Activated CD4-positive, alpha-beta T cell treated with anti-CD3 and anti-CD28 coated beads, Interleukin-2, amount 10 ng/mL, durations not matched to agents 24 days and 14 days (primary cell): ENCODE measurements at regions of chr3 and their contacts with region 1.

Region 1: GRCh38 chr3:88058591-88059368 is at the starts of genes CGGBP1 and ZNF654:
- DNase-seq: peak; percentile 100
- H3K4me3 Mint-ChIP-seq: peak within 1 kb of the TSS; percentile 100
- H3K27ac Mint-ChIP-seq: peak within 1 kb of the TSS; percentile 97
- H3K4me1 Mint-ChIP-seq: peaks cover 49% of the 10 kb centered on the region
- H3K27me3 Mint-ChIP-seq: no peaks in the 10 kb centered on the region
- total RNA-seq, gene CGGBP1: 85.9 and 87.2 TPM in 2 replicates
- total RNA-seq, gene ZNF654: 18.1 and 18.7 TPM in 2 replicates

Region 2: GRCh38 chr3:87997298-87997697 is 61.5 kb before region 1 on chr3:
- intact Hi-C with region 1: loop called (anchors 2 kb)
- DNase-seq: peak; percentile 81
- H3K4me3 Mint-ChIP-seq: peak overlapping the region; percentile 63
- H3K27ac Mint-ChIP-seq: peak overlapping the region; percentile 75
- H3K4me1 Mint-ChIP-seq: peaks cover 17% of the 10 kb centered on the region
- H3K27me3 Mint-ChIP-seq: peaks cover 5% of the 10 kb centered on the region

Region 3: GRCh38 chr3:88031642-88032077 is 27.1 kb before region 1 on chr3:
- intact Hi-C with region 1: loop called (anchors 1 kb)
- DNase-seq: peak; percentile 73
- H3K4me3 Mint-ChIP-seq: peak overlapping the region; percentile 84
- H3K27ac Mint-ChIP-seq: peak overlapping the region; percentile 68
- H3K4me1 Mint-ChIP-seq: peaks cover 30% of the 10 kb centered on the region
- H3K27me3 Mint-ChIP-seq: no peaks in the 10 kb centered on the region

Region 4: DNA sequence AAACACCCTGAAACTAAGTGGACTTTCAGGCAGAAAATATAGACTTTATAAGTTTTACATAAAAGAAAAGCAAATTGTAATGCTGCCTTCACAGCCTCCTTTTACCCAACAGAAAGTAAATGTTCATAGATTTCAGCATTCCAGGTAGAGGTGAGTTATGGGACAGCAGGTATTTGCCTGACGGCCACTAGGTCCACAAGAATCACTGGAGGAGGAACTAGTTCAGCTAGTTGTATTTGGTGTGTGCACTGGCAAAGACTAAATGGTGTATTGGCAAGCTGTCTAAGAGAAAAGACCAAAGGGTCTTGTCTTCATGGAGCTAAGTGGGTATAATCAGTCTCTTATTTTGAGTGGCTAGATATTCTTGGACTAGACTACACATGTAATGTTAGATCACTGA is 34.5 kb after region 1 on chr3:
- intact Hi-C with region 1: no loop called
- DNase-seq: no peak
- H3K4me3 Mint-ChIP-seq: no peak overlapping the region
- H3K27ac Mint-ChIP-seq: no peak overlapping the region
- H3K4me1 Mint-ChIP-seq: peaks cover 7% of the 10 kb centered on the region
- H3K27me3 Mint-ChIP-seq: no peaks in the 10 kb centered on the region

Region 5: DNA sequence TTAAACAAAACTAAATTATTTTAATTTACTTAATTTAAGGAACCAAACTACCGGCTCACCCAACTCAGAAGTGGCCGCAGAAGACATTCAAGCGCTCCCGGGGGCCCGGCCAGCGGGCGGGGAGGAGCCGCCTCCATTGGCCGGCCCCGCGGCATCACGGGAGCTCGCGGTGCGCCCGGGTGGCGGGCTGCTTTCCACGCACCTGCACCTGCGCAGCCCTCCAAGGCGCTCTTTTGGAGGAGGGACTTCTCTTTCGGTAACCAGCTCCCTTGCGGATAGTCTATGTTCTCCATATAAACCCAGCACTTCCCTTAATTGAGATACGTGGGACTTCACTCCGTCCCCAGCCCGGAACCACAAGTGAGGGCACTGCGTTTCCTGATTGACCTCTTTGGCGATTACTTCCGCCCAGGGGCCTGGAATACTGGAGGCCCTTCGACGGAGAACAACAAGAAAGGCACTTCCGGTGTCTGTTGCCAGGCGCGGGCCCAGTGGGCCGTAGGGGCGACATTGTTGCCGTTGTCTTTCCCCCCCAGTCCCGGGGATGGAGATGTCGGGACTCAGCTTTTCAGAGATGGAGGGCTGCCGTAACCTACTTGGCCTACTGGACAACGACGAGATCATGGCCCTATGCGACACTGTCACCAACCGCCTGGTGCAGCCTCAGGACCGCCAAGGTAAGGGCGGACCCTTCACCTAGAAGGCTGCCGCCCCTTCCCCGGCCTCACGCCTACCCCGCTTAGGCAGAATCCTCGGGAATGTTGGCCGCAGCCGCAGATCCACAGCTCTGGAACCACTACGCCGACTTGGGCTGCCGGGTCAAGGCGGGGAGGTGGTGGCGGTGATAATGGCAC is 91.0 kb after region 1 on chr3 and contains the start of gene C3orf38:
- intact Hi-C with region 1: loop called (anchors 1 kb)
- DNase-seq: peak; percentile 95
- H3K4me3 Mint-ChIP-seq: peak within 1 kb of the TSS; percentile 96
- H3K27ac Mint-ChIP-seq: peak within 1 kb of the TSS; percentile 99
- H3K4me1 Mint-ChIP-seq: peaks cover 39% of the 10 kb centered on the region
- H3K27me3 Mint-ChIP-seq: no peaks in the 10 kb centered on the region
- total RNA-seq, gene C3orf38: 19.9 and 24.1 TPM in 2 replicates